ENCODE measurements at regions of chr1 and their contacts with region 1.

Region 1: GRCh38 chr1:9110669-9111356 is 18.1 kb downstream of the GPR157 start:
- DNase-seq: peak; percentile 85
- ATAC-seq: peak; percentile 53
- H3K4me3 ChIP-seq: no peak overlapping the region; a peak in 1 of 6 replicates
- H3K27ac ChIP-seq: no peak overlapping the region
- H3K4me1 ChIP-seq: peaks cover 55% of the 10 kb centered on the region
- H3K27me3 ChIP-seq: no peaks in the 10 kb centered on the region
- CTCF ChIP-seq: peak; percentile 97
- EP300 ChIP-seq: no peak
- POLR2A ChIP-seq: no peak
- RAD21 ChIP-seq: peak; percentile 93

Region 2: GRCh38 chr1:9038881-9039760 is 71.7 kb before region 1 on chr1:
- CTCF ChIA-PET with region 1: no interaction called
- POLR2A ChIA-PET with region 1: no interaction called
- in situ Hi-C with region 1: no loop called
- intact Hi-C with region 1: no loop called
- DNase-seq: no peak
- ATAC-seq: no peak
- H3K4me3 ChIP-seq: no peak overlapping the region
- H3K27ac ChIP-seq: no peak overlapping the region
- H3K4me1 ChIP-seq: no peaks in the 10 kb centered on the region
- H3K27me3 ChIP-seq: peaks cover 1 to 17% of the 10 kb centered on the region in 2 experiments; a peak in 4 of 5 replicates
- CTCF ChIP-seq: no peak
- EP300 ChIP-seq: no peak
- POLR2A ChIP-seq: no peak
- RAD21 ChIP-seq: no peak

Region 3: DNA sequence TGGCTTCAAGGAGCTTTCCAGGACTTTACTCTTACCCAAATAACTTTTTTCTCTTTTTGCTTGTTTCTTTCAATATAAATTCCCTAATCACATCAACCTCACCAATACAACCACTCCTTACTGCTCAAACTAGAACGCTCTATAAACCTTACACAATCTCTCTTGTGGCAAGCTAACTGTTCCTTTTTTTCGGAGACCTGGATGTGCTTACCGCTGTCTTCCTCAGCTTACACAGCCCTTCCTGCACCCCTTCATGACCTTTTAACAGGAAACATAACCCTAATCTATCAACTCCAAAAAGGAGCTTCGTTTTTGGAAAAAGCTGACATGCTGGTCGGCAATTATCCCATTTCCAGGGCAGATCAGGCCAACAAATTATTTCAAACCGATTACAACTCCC is 17.2 kb before region 1 on chr1:
- CTCF ChIA-PET with region 1: no interaction called
- POLR2A ChIA-PET with region 1: no interaction called
- in situ Hi-C with region 1: no loop called
- intact Hi-C with region 1: no loop called
- DNase-seq: no peak
- ATAC-seq: no peak
- H3K4me3 ChIP-seq: no peak overlapping the region
- H3K27ac ChIP-seq: no peak overlapping the region
- H3K4me1 ChIP-seq: peaks cover 4% of the 10 kb centered on the region
- H3K27me3 ChIP-seq: peaks cover 1 to 33% of the 10 kb centered on the region in 2 experiments; a peak in 3 of 5 replicates
- CTCF ChIP-seq: no peak
- EP300 ChIP-seq: no peak
- POLR2A ChIP-seq: no peak
- RAD21 ChIP-seq: no peak

Region 4: DNA sequence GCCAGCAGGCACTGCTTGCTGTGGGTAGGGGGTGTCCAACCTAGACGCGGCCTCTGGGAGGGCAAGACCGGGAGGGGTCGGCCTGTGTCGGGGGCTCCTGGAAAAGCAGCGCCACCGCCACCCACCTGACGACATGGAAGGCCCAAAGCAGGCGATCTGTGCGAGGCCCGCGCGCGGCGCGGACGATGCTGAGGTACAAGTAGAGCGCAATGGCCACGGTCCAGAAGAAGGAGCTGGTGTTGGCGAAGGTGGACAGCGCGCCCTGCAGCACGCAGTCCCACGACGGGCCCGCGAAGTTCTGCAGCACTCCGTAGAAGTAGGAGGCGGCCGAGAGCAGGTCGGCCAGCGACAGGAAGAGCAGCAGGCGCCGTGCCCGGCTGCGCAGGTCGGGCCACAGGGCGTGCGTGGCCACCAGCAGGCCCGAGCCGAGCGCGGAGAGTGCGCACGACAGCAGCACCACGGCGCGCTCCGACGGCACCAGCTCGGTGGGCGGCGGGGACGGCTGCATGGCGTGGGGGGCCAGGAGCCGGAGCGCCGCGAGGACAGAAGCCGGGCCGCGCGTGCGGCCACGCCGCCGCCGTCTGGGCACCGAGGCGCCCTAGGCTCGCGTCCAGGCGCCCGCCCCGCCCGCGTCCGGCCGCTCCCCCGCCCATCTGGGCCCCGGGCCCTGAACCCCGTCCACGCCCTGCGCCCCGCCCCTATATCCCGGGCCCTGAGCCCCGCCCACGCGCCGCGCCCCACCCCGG is 17.9 kb after region 1 on chr1 and contains the start of gene GPR157:
- CTCF ChIA-PET with region 1: interaction called, 5 read pairs
- POLR2A ChIA-PET with region 1: interaction called, 25 read pairs
- in situ Hi-C with region 1: no loop called
- intact Hi-C with region 1: loop called (anchors 1 kb)
- DNase-seq: peak; percentile 62
- ATAC-seq: peak; percentile 75
- H3K4me3 ChIP-seq: peak within 1 kb of the TSS; percentile 71 to 90 (median 90)
- H3K27ac ChIP-seq: peak within 1 kb of the TSS; percentile 63
- H3K4me1 ChIP-seq: peaks cover 35% of the 10 kb centered on the region
- H3K27me3 ChIP-seq: no peaks in the 10 kb centered on the region; a peak in 1 of 5 replicates
- CTCF ChIP-seq: peak; percentile 57
- EP300 ChIP-seq: no peak
- POLR2A ChIP-seq: peak; percentile 15 to 69; a peak in 2 of 4 replicates
- RAD21 ChIP-seq: peak; percentile 73
- total RNA-seq, gene GPR157: 8.4 and 10.1 TPM in 2 replicates

Region 5: GRCh38 chr1:9181176-9181906 is 70.5 kb after region 1 on chr1:
- CTCF ChIA-PET with region 1: interaction called, 4 read pairs
- POLR2A ChIA-PET with region 1: no interaction called
- in situ Hi-C with region 1: no loop called
- intact Hi-C with region 1: loop called (anchors 5 kb)
- DNase-seq: peak; percentile 61
- ATAC-seq: peak; percentile 74
- H3K4me3 ChIP-seq: peak overlapping the region; percentile 88 to 94 (median 92)
- H3K27ac ChIP-seq: peak overlapping the region; percentile 92
- H3K4me1 ChIP-seq: peaks cover 71% of the 10 kb centered on the region
- H3K27me3 ChIP-seq: no peaks in the 10 kb centered on the region; a peak in 1 of 5 replicates
- CTCF ChIP-seq: peak; percentile 99
- EP300 ChIP-seq: no peak
- POLR2A ChIP-seq: peak in 1 of 2 experiments; percentile 37; a peak in 1 of 4 replicates
- RAD21 ChIP-seq: peak; percentile 77